GM12878 (cell line): ENCODE measurements at regions of chr4 and their contacts with region 1.

Region 1: GRCh38 chr4:73376976-73377375 is 27.1 kb upstream of the ALB start:
- DNase-seq: no peak
- ATAC-seq: no peak
- H3K4me3 ChIP-seq: no peak overlapping the region
- H3K27ac ChIP-seq: no peak overlapping the region
- H3K4me1 ChIP-seq: no peaks in the 10 kb centered on the region
- H3K27me3 ChIP-seq: no peaks in the 10 kb centered on the region
- CTCF ChIP-seq: no peak
- EP300 ChIP-seq: no peak
- POLR2A ChIP-seq: no peak
- RAD21 ChIP-seq: no peak

Region 2: GRCh38 chr4:73387552-73387951 is 10.6 kb after region 1 on chr4:
- CTCF ChIA-PET with region 1: no interaction called
- POLR2A ChIA-PET with region 1: no interaction called
- RAD21 ChIA-PET with region 1: no interaction called
- SMC1A ChIA-PET with region 1: no interaction called
- in situ Hi-C with region 1: no loop called
- intact Hi-C with region 1: loop called (anchors 1 kb)
- DNase-seq: no peak
- ATAC-seq: peak; percentile 76
- H3K4me3 ChIP-seq: no peak overlapping the region
- H3K27ac ChIP-seq: no peak overlapping the region
- H3K4me1 ChIP-seq: no peaks in the 10 kb centered on the region
- H3K27me3 ChIP-seq: no peaks in the 10 kb centered on the region
- CTCF ChIP-seq: no peak
- EP300 ChIP-seq: peak; percentile 60 to 78; a peak in 2 of 4 replicates
- POLR2A ChIP-seq: no peak
- RAD21 ChIP-seq: no peak